Right cardiac atrium (tissue), 5 donors: ENCODE measurements at regions of chr5 and their contacts with region 1.

Region 1: DNA sequence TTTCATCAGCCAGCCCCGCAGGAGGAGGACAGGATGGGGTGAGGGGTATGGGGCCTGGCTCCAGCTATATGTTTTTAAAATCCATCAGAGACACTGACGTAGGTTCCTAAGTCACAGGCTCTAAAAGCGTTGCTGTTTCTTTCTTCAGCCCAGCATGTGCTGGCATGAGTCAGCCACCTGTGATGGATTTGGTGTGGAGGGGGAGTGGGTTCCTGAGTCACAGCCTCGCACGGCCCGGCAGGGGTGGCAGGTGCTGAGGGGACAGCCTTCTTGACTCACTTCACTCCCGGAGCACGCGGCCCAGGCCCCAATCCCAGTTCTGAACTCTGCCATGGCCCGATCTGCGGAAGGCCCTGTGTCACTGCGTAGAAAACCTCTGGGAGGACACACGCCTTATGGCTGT is 38.8 kb upstream of the RPL26L1 start:
- DNase-seq: peak in 1 of 3 donors; percentile 28
- ATAC-seq: peak in 1 of 2 donors; percentile 22
- H3K4me3 ChIP-seq: no peak overlapping the region
- H3K27ac ChIP-seq: no peak overlapping the region
- H3K4me1 ChIP-seq: no peaks in the 10 kb centered on the region
- H3K27me3 ChIP-seq: no peaks in the 10 kb centered on the region

Region 2: DNA sequence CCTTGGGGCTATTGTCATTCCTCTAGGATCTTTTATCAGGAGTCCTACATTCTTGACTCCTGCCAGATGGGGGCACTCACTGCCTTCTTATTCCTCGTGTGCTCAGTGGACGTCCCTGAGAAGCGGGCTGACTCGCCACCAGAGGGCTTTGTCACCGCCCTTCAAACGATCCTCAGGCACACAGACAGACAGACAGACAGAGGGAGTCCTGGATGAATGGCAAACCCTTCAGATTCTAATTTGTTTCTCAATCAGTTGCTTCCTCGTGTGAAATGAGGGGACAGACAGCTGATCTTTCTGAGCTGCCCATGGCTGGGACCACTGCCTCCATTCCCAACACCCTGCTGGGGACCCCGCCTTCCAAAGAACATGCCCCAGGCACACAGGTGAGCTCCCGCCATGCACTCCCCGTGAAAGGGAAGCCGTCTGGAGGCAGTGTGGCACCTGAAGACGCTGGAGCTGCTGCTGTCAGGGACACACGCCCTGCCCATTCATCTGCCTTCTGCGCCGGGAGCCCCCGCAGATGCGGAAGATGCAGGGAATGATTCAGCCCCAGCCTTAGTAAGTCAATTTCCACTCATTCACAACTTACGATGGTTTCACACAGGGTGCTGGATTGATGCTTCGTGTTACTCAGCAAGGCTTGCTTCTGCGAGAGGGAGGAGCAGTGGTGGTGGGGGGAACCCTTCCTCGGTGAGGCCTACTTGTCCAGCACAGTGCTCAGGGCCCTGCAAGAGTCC is 441.2 kb before region 1 on chr5:
- intact Hi-C with region 1: loop called in 1 of 4 experiments (anchors 10 kb)
- DNase-seq: peak; percentile 91 to 94 (median 92)
- ATAC-seq: peak; percentile 96
- H3K4me3 ChIP-seq: no peak overlapping the region
- H3K27ac ChIP-seq: peak overlapping the region; percentile 58
- H3K4me1 ChIP-seq: peaks cover 3% of the 10 kb centered on the region
- H3K27me3 ChIP-seq: no peaks in the 10 kb centered on the region

Region 3: DNA sequence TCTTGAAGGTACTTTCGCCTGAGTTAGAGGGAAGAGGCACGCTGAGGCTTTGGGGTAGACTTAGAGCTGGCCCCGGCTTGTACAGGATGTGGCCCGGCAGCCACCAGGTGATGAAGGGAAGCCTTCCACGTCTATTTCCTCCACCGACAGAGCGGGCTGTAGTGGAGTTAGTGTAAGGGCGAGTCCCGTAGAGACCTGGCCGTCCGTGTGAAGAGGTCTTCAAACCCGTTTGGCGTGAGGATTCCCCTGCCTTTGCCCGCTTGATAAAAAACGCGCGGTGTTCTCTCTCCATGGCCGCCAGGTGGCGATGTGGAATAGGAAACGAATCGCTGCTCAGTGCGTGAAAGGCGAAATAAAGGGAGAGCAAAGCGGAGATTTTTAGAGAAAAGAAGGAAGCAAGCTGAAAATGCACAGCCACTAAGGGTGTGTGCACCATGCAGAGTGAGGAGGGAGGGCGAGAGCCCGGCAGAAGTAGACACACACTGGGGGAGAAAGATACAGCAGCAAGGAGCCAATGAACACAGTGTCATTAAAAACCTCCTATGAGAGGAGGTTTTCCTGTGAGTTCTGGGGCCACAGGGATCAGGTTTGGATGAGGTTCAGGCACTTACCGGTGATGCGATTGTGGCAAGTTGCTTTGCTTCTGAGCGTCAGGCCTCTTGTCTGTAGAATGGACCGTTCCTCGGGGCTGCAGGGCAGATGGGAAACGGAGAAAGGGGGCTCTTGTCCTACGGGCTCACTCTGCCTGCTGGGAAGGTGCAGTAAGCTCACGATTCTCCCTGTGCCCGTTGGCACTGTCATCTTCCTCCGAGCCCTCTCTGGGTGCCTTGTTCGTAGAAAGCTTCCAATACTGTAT is 373.6 kb after region 1 on chr5:
- intact Hi-C with region 1: no loop called
- DNase-seq: peak; percentile 75 to 89 (median 87)
- ATAC-seq: peak; percentile 60 to 62
- H3K4me3 ChIP-seq: no peak overlapping the region
- H3K27ac ChIP-seq: no peak overlapping the region
- H3K4me1 ChIP-seq: no peaks in the 10 kb centered on the region
- H3K27me3 ChIP-seq: no peaks in the 10 kb centered on the region